Endothelial cell of umbilical vein (primary cell): ENCODE measurements at regions of chr12 and their contacts with region 1.

Region 1: DNA sequence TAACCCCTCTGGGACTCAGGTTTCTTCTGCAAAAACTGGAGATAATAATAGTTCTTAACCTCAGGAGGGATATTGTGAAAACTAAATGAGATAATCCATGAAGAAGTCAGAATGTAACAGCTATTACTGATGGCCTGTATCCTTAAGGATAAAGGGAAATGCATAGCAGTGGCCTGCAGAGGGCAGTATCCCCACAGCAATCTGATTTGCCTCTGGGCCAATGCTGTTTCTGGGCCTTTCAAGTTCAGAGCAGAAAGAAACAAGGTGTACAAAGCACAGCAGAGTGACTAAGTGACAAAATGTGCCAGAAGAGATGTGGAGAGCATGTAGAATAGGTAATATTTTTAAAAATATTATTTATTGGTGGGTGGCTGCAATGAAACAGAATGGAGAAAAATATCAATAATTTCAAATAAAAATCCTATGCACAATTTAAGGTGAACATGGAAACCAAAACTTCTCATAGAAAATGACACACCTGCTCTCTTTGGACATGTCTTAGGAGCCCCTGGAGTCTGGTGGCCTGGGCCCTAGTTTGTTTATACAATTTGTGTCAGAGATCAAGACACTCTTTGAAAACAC is 90.3 kb downstream of the C12orf75 start:
- DNase-seq: peak; percentile 90
- H3K4me3 ChIP-seq: no peak overlapping the region
- H3K27ac ChIP-seq: peak overlapping the region; percentile 20
- H3K4me1 ChIP-seq: peaks cover 7% of the 10 kb centered on the region
- H3K27me3 ChIP-seq: no peaks in the 10 kb centered on the region
- CTCF ChIP-seq: peak; percentile 70 to 90
- POLR2A ChIP-seq: no peak

Region 2: DNA sequence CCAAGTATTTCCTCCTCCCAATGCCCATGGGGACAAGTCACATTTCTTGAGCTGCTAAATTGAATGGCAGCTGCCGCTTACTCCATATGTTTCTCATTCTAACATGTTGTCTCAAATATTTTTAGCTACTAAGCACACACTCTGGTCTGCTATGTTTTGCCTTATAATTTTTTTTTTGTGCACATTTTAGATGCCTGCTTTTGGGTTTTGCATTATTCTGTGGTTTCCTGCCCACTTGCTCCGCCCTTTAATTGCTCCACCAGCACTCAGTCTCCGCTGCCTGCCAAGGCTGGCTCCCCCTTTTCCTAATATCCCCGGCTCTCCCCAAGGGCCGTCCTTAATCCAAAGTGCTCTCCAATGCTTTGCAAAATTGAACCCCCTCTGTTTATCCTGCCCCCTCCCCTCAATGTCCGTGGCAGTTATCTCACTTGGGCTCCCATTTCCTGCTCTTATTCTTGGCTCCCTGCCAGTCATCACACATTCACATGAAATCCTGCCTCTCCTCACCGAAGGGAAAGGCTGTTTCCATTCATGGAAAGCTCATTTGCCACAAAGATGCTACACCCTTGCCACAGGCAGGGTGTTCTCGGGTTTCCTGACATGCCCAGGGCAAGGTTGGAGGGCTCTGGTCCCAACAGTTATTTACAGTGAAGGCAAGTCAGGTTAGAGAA is 10.8 kb before region 1 on chr12:
- CTCF ChIA-PET with region 1: interaction called, 22 read pairs
- POLR2A ChIA-PET with region 1: no interaction called
- dilution Hi-C with region 1: no loop called
- intact Hi-C with region 1: no loop called
- DNase-seq: peak; percentile 96
- H3K4me3 ChIP-seq: peak overlapping the region in 1 of 3 experiments; percentile 9
- H3K27ac ChIP-seq: no peak overlapping the region
- H3K4me1 ChIP-seq: peaks cover 21% of the 10 kb centered on the region
- H3K27me3 ChIP-seq: no peaks in the 10 kb centered on the region
- CTCF ChIP-seq: no peak
- POLR2A ChIP-seq: no peak

Region 3: GRCh38 chr12:105474672-105475071 is 53.9 kb after region 1 on chr12:
- CTCF ChIA-PET with region 1: interaction called, 72 read pairs
- POLR2A ChIA-PET with region 1: no interaction called
- dilution Hi-C with region 1: no loop called
- intact Hi-C with region 1: no loop called
- DNase-seq: peak; percentile 62
- H3K4me3 ChIP-seq: no peak overlapping the region
- H3K27ac ChIP-seq: peak overlapping the region; percentile 4
- H3K4me1 ChIP-seq: peaks cover 67% of the 10 kb centered on the region
- H3K27me3 ChIP-seq: no peaks in the 10 kb centered on the region
- CTCF ChIP-seq: no peak
- POLR2A ChIP-seq: no peak

Region 4: GRCh38 chr12:105523164-105524015 is 102.6 kb after region 1 on chr12:
- CTCF ChIA-PET with region 1: interaction called, 17 read pairs
- POLR2A ChIA-PET with region 1: no interaction called
- dilution Hi-C with region 1: no loop called
- intact Hi-C with region 1: no loop called
- DNase-seq: peak; percentile 18
- H3K4me3 ChIP-seq: no peak overlapping the region
- H3K27ac ChIP-seq: no peak overlapping the region
- H3K4me1 ChIP-seq: peaks cover 3% of the 10 kb centered on the region
- H3K27me3 ChIP-seq: no peaks in the 10 kb centered on the region
- CTCF ChIP-seq: no peak
- POLR2A ChIP-seq: no peak

Region 5: DNA sequence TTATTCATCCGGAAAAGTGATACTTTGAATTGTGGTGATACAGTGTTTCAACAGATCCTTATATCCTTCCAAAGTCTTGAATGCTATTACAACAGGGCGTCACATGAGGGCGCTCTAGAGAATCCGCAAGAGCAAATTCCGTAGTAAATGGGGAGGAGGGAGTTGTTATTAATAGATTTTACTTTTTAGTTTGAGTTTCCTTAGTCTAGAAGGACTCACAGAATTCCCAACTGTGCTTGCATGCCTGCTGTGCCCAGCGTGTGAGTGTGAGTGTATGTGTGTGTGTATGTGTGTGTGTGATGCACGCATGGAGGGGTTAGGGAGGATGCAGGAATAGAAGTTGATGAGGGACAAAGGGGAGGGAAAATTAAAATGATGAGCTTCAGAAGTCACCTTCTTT is 285.0 kb after region 1 on chr12:
- CTCF ChIA-PET with region 1: interaction called, 31 read pairs
- POLR2A ChIA-PET with region 1: no interaction called
- dilution Hi-C with region 1: no loop called
- intact Hi-C with region 1: loop called (anchors 1 kb)
- DNase-seq: peak; percentile 77
- H3K4me3 ChIP-seq: no peak overlapping the region
- H3K27ac ChIP-seq: no peak overlapping the region
- H3K4me1 ChIP-seq: peaks cover 9% of the 10 kb centered on the region
- H3K27me3 ChIP-seq: peaks cover 4 to 7% of the 10 kb centered on the region in 2 experiments
- CTCF ChIP-seq: peak; percentile 63 to 65
- POLR2A ChIP-seq: no peak

Region 6: DNA sequence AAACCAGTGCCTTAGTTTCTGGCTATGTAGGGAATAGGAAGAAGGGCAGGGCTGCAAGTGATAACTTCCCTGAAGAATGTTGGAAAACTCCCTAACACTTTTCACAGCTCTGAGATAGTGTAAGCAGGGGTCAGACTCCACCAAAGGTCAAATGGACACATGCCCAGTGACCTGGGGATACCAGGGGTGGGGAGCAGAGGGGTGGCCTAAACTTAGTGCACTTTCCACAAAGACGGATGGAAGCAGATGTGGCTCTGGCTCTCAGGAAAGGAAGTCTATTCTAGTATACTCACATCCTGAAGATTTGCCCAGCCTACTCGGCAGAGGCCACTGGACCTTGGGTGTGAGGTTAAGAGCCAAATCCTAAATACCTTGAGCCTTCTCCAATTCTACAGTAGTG is 432.2 kb after region 1 on chr12:
- CTCF ChIA-PET with region 1: no interaction called
- POLR2A ChIA-PET with region 1: no interaction called
- dilution Hi-C with region 1: no loop called
- intact Hi-C with region 1: no loop called
- DNase-seq: no peak
- H3K4me3 ChIP-seq: no peak overlapping the region
- H3K27ac ChIP-seq: no peak overlapping the region
- H3K4me1 ChIP-seq: peaks cover 23% of the 10 kb centered on the region
- H3K27me3 ChIP-seq: no peaks in the 10 kb centered on the region
- CTCF ChIP-seq: no peak
- POLR2A ChIP-seq: no peak

Region 7: DNA sequence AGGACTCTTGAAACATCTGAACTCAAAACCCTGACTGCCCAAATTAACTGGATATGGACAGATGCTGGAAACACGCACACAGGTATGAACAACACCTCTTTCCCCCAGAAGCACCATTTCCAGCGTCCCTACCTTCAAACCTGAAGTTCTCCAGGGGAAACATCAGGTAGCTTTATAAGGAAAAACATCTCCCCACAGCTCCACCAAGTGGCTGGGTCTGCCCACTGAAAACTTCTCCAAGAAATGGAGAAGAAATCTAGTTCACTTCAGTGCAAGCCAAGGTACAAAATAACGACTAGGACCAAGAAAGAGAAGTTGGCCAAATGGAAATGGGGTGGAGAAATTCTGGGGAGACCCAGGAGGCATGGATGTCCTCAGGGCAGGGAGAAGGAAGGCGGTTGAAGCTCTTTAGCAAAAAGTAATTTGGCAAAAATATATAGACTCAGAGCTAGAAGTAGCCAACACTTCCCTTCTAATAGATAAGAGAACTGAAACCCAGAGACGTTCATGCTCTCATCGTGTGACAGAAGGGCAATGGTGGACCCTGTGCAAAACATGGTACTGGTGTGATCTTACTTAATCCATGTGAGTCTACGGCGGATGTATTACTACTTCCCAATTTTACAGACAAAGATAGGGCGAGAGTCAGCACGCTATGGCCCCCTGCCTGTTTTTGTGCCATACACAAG is 728.5 kb after region 1 on chr12:
- CTCF ChIA-PET with region 1: interaction called, 60 read pairs
- POLR2A ChIA-PET with region 1: no interaction called
- dilution Hi-C with region 1: no loop called
- intact Hi-C with region 1: no loop called
- DNase-seq: peak; percentile 59
- H3K4me3 ChIP-seq: no peak overlapping the region
- H3K27ac ChIP-seq: no peak overlapping the region
- H3K4me1 ChIP-seq: peaks cover 17% of the 10 kb centered on the region
- H3K27me3 ChIP-seq: no peaks in the 10 kb centered on the region
- CTCF ChIP-seq: peak; percentile 55 to 68
- POLR2A ChIP-seq: no peak